ENCODE measurements at regions of chr6 and their contacts with region 1.

Region 1: DNA sequence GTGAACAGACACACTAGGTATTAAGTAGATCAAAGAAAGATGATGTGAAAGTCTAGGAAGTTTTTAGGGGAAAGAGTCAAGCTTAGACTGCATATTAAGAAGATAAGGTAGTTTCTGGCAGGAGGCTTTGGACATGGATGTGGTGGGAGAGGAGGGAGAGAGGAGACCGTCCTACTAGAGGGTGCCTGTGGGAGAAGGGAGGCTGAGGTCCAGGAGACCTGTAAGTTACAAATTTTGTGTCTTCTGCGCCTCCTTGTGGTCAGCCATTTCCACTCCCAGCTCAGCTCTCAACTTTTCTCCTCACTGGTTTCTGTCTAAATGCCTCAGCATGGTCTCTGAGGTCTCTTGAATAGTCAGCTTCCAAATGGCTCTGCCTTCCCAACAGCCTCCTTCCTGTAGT is 193.5 kb downstream of the UNC5CL start:
- DNase-seq: peak; percentile 48
- ATAC-seq: peak; percentile 87
- H3K4me3 ChIP-seq: no peak overlapping the region
- H3K27ac ChIP-seq: no peak overlapping the region
- H3K4me1 ChIP-seq: no peaks in the 10 kb centered on the region
- H3K27me3 ChIP-seq: peaks cover 0 to 10% of the 10 kb centered on the region in 2 experiments; a peak in 3 of 5 replicates
- CTCF ChIP-seq: peak; percentile 73
- EP300 ChIP-seq: no peak
- POLR2A ChIP-seq: no peak
- RAD21 ChIP-seq: peak; percentile 45; the same call in 1 of the 2 replicates

Region 2: DNA sequence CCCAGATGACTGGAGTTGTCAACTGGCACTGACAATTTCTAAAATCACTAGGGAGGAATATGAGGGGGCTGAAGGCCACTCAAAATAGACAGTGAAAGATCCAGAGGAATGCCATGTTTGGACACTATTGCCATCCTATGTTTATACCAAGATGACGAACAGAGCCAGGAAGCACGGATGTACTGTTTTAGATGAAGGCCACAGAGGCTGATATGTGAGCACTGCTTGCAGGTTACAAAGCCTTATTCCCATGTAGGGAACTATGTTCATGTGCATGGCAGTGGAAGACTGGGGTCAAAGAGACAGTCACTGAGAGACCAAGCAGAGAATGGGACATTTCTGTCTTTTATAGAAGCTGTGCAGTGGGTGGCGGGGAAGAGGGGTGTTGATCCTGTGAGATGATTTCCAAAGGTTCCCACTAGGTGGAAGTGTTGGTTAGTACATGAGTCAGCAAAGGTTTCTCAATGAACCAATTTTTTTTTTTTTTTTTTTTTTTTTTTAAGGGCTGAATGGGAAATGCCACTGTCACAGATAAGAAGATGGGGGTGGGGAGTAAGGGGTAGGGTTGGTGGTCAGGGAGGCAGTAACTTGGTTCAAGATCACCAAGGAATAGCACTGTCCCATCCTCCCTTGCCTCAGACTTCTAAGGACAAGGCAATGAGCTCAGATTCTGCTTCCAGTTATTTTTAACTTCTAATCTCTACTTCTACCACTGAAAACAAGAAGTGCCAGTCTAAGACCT is 864.5 kb before region 1 on chr6:
- CTCF ChIA-PET with region 1: no interaction called
- POLR2A ChIA-PET with region 1: no interaction called
- in situ Hi-C with region 1: loop called (anchors 25 kb)
- intact Hi-C with region 1: no loop called
- DNase-seq: peak; percentile 52
- ATAC-seq: peak; percentile 91
- H3K4me3 ChIP-seq: no peak overlapping the region
- H3K27ac ChIP-seq: no peak overlapping the region
- H3K4me1 ChIP-seq: no peaks in the 10 kb centered on the region
- H3K27me3 ChIP-seq: no peaks in the 10 kb centered on the region
- CTCF ChIP-seq: peak; percentile 70
- EP300 ChIP-seq: no peak
- POLR2A ChIP-seq: no peak
- RAD21 ChIP-seq: no peak

Region 3: DNA sequence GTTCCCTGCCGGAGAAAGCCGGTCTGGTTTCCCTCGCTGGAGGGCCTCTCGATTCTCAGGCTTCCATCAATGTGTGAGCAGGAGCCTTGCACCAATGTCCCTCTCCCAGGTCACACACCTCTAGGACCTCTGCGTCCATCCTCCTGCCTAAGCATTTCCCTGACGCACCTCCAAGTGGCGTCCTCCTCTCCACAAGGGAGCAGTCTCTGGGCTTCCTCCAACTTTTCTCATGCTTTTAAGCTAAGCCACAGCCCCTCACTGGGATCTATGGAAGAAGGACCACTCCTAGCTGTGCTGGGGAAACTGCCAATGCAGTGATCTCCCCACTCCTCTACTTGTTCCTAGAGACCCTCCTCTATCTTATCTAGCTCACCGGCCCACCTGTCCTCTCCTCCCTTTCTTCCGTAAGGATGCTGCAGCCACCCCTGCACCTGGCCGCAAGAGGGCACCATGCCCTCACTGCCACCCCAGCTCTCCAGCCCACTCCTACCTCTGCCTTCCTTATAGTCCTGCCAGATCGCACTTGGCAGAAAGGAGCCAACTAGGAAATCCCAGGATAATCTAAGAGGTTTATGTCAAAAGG is 517.1 kb before region 1 on chr6:
- CTCF ChIA-PET with region 1: interaction called, 4 read pairs
- POLR2A ChIA-PET with region 1: no interaction called
- in situ Hi-C with region 1: no loop called
- intact Hi-C with region 1: loop called (anchors 5 kb)
- DNase-seq: no peak
- ATAC-seq: peak; percentile 87
- H3K4me3 ChIP-seq: no peak overlapping the region
- H3K27ac ChIP-seq: no peak overlapping the region
- H3K4me1 ChIP-seq: no peaks in the 10 kb centered on the region
- H3K27me3 ChIP-seq: peaks cover under 1 to 3% of the 10 kb centered on the region in 2 experiments; a peak in 1 of 5 replicates
- CTCF ChIP-seq: peak; percentile 90
- EP300 ChIP-seq: no peak
- POLR2A ChIP-seq: no peak
- RAD21 ChIP-seq: peak; percentile 59

Region 4: DNA sequence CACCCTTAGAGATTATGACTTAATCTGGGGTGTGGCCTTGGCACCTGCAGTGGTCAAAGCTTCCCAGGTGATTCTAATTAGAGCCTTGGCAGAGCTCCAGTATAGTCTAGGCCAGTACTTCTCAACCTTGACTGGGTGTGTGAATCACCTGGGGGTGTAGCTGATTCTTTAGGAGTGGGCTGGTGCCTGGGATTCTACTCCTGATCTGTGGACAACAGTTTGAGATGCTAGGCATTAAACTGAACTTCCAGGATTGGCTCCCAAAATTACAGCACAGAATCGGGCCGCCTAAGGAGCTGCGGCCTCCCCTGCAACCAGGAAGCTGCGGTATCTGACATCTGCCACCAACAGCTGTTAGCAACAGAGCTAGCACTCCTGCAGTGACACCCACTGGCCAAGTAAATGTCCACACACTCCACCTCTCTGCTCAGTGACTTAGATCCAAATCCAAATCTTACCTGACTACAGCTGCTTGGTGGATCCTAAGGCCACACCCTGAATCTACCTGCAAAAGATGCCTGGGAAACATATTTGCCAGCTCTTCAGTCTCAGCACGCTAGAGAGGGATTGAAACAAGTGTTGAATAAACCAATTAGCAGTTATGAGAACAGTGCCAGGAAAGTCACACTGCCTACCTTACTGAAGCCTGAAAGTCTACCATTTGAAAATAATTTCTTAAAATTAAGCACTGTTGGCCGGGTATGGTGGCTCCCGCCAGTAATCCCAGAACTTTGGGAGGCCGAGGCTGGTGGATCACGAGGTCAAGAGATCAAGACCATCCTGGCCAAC is 66.8 kb after region 1 on chr6:
- CTCF ChIA-PET with region 1: interaction called, 5 read pairs
- POLR2A ChIA-PET with region 1: no interaction called
- in situ Hi-C with region 1: no loop called
- intact Hi-C with region 1: loop called (anchors 1 kb)
- DNase-seq: peak; percentile 75
- ATAC-seq: peak; percentile 98
- H3K4me3 ChIP-seq: no peak overlapping the region
- H3K27ac ChIP-seq: no peak overlapping the region
- H3K4me1 ChIP-seq: peaks cover 46% of the 10 kb centered on the region
- H3K27me3 ChIP-seq: no peaks in the 10 kb centered on the region
- CTCF ChIP-seq: peak; percentile 98
- EP300 ChIP-seq: no peak
- POLR2A ChIP-seq: no peak
- RAD21 ChIP-seq: peak; percentile 86

Region 5: GRCh38 chr6:41027799-41028628 is 182.5 kb after region 1 on chr6:
- CTCF ChIA-PET with region 1: interaction called, 3 read pairs
- POLR2A ChIA-PET with region 1: no interaction called
- in situ Hi-C with region 1: no loop called
- intact Hi-C with region 1: loop called (anchors 5 kb)
- DNase-seq: peak; percentile 47
- ATAC-seq: peak; percentile 95
- H3K4me3 ChIP-seq: peak overlapping the region in 1 of 3 experiments; percentile 45; a peak in 1 of 6 replicates
- H3K27ac ChIP-seq: no peak overlapping the region
- H3K4me1 ChIP-seq: peaks cover 19% of the 10 kb centered on the region
- H3K27me3 ChIP-seq: no peaks in the 10 kb centered on the region
- CTCF ChIP-seq: peak; percentile 99
- EP300 ChIP-seq: no peak
- POLR2A ChIP-seq: no peak
- RAD21 ChIP-seq: peak; percentile 99